ENCODE measurements at regions of chr9 and their contacts with region 1.

Region 1: GRCh38 chr9:75071530-75072124 is 16.3 kb downstream of the NMRK1 start:
- DNase-seq: no peak
- H3K4me3 ChIP-seq: no peak overlapping the region
- H3K27ac ChIP-seq: no peak overlapping the region
- H3K4me1 ChIP-seq: no peaks in the 10 kb centered on the region
- H3K27me3 ChIP-seq: no peaks in the 10 kb centered on the region
- CTCF ChIP-seq: no peak
- EP300 ChIP-seq: no peak
- POLR2A ChIP-seq: no peak

Region 2: DNA sequence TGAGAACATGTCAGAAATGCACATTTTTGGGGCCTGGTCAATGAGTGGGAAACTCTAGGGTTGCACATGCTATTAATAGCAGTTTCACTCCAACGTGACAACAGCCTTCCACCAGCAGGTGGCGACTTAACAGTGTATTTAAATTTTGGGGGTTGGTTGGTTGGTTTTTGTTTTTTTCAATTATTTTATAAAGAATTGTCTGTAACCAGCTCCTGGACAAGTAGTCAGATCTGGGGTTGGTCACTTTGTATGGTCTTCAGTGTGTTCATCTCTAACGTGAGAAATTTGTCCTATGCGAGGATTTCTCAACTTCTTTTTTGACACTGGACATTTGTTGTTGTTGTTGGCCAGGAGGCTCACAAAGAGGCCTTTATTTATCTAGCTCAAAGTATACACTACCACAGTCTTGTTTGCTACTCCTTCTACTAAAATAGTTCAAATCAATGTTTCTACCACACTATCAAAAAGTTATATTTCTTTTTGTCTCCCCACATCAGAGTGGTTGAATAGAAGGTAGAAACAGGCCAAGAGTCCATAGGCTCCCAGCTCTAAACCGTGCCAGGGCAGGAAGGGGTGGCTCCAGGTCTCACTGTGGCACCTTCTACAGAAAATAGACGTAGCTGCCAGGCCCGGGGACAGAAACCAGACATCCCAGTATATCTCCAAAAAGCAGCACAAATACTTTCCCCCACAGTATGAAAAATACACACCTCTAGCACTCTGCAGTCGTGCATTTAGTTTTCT is 294.3 kb before region 1 on chr9:
- intact Hi-C with region 1: loop called (anchors 5 kb)
- DNase-seq: no peak
- H3K4me3 ChIP-seq: no peak overlapping the region
- H3K27ac ChIP-seq: no peak overlapping the region
- H3K4me1 ChIP-seq: peaks cover 0 to 4% (median 0%) of the 10 kb centered on the region in 4 donors
- H3K27me3 ChIP-seq: peaks cover 0 to 8% (median 0%) of the 10 kb centered on the region in 4 donors
- CTCF ChIP-seq: peak; percentile 71 to 81 (median 80)
- EP300 ChIP-seq: no peak
- POLR2A ChIP-seq: no peak

Region 3: DNA sequence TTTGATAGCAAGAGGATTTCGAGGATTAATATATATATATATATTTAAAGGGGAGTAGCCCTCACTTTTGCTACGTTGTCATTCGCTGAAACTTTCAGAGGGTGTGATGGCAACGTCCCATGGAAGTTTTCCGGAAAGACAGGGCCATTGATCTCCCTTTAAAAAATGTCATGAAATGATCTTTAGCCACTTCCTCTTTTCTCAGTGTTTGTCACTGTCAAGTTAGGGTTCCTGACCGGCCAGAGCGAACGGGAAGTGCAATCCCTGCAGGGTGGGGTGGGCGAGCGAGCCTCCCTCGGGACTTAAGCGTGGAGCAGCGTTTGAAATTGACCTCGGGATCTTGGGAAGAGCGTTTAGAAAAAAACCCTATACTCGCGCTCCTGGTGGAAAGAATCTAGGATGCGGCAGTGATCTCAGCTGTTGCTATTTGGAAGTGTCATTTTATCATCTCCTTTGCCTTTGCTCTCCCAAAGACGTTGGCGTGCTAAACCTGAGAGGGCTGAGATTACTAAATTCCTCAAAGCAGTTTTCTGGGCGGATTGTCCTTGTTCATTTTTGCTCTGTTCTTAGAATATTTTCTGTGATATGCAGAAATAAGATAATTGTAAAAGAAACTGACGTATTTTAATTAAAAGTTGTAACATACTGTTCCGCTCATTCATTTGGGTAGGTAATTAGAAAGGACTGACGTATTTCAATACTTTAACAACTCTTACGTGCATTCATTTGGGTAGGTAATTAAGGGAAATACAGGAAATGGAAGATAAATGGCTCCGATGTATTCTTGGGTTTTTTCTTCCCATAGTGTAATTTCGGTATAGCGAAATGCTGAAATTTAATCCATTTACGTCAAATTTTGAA is 17.5 kb after region 1 on chr9:
- intact Hi-C with region 1: no loop called
- DNase-seq: peak; percentile 92
- H3K4me3 ChIP-seq: peak overlapping the region; percentile 82 to 99 (median 96)
- H3K27ac ChIP-seq: peak overlapping the region; percentile 94 to 98 (median 96)
- H3K4me1 ChIP-seq: peaks cover 33 to 56% (median 41%) of the 10 kb centered on the region in 4 donors
- H3K27me3 ChIP-seq: no peaks in the 10 kb centered on the region
- CTCF ChIP-seq: peak; percentile 38 to 68 (median 38)
- EP300 ChIP-seq: no peak
- POLR2A ChIP-seq: no peak